Psoas muscle (tissue), 8 donors: ENCODE measurements at regions of chr20 and their contacts with region 1.

Region 1: GRCh38 chr20:23050847-23051631 is 1.6 kb upstream of the THBD start:
- DNase-seq: peak; percentile 86 to 91
- ATAC-seq: peak; percentile 34 to 51 (median 50)
- H3K4me3 ChIP-seq: peak overlapping the region; percentile 75
- H3K27ac ChIP-seq: peak overlapping the region; percentile 97
- H3K4me1 ChIP-seq: peaks cover 12% of the 10 kb centered on the region
- H3K27me3 ChIP-seq: no peaks in the 10 kb centered on the region
- CTCF ChIP-seq: peak; percentile 77

Region 2: DNA sequence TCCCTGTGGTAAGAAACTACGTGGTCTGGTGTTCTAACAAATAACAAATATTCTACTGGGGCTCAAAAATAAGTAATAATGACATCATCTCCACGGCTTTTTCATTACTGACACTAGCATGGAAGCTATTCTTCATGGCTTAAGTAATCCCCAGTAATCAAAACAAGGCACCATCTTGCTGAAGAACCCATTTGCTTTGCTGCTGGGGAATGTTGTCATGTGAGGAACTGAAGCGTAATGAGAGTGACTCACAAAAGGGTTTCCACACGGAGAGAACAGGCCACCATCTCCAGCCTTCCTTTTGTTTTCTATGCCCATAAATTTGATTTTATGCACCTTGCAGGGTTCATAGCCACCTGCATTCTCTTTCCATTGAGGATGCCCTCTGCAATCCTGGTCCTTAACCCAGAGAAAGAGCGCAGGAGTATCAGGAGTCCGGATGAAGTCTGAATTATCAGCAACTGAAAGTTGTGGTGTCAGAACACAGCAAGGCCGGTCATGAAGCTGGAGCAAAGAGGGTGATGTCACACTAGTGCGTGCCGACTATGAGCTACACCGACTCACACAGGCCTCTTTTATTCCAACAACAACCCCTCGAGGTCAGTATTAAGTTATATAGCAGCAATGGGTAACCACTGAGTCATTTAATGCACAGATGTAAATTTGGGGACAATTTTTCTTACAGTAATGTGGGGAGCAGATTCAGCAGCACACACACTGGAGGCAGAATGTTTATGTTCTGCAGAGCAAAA is 189.6 kb before region 1 on chr20:
- intact Hi-C with region 1: loop called in 1 of 2 experiments (anchors 10 kb)
- DNase-seq: no peak
- ATAC-seq: no peak
- H3K4me3 ChIP-seq: no peak overlapping the region
- H3K27ac ChIP-seq: no peak overlapping the region
- H3K4me1 ChIP-seq: no peaks in the 10 kb centered on the region
- H3K27me3 ChIP-seq: peaks cover 0 to 4% (median 2%) of the 10 kb centered on the region in 3 donors
- CTCF ChIP-seq: no peak

Region 3: GRCh38 chr20:23116311-23117089 is 65.5 kb after region 1 on chr20:
- intact Hi-C with region 1: no loop called
- DNase-seq: no peak
- ATAC-seq: peak in 2 of 4 donors; percentile 27 to 36
- H3K4me3 ChIP-seq: no peak overlapping the region
- H3K27ac ChIP-seq: no peak overlapping the region
- H3K4me1 ChIP-seq: peaks cover 8% of the 10 kb centered on the region
- H3K27me3 ChIP-seq: no peaks in the 10 kb centered on the region
- CTCF ChIP-seq: no peak

Region 4: DNA sequence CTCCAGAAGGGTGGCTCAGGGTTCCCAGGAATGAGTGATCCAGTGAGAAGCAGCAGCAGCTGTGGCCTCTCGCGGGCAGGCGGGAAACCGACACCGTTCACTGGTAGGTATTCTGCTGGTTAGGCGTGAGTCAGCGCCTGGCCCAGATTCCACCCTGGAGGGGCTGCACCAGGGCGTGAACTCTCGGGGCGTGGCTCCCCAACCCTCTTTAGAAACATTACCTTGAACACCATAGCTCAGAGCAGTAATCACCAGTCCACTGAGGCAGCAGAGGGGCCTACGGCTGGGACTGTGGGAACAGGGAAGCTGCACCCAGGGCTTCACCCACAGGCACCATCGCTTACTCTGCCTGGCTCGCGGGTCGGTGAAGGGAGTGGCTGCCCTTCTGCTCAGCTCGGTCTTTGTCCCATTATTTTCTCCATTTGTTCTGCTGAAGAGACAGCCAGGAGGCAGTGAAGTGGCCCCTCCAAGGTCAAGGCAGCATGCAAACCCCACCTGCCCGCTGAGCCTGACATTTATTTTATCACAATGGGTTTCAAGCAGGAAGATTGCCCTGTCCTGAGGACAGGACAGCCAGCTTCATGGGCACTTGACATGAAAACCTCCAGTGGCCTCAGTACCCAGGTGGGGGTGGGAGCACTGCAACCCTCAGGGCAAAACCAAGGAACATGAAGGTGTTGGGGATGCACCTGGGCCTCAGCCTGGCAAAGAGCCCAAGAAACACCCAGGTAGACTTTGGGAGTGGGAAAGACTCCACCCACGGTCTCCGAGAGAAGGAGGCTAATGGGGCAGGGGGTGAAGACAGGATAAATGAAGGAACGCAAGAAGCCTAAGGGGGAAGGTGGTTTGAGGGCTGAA is 86.1 kb after region 1 on chr20:
- intact Hi-C with region 1: no loop called
- DNase-seq: peak; percentile 89 to 97
- ATAC-seq: peak; percentile 96 to 98 (median 98)
- H3K4me3 ChIP-seq: peak overlapping the region; percentile 30
- H3K27ac ChIP-seq: peak overlapping the region; percentile 91
- H3K4me1 ChIP-seq: peaks cover 59% of the 10 kb centered on the region
- H3K27me3 ChIP-seq: no peaks in the 10 kb centered on the region
- CTCF ChIP-seq: no peak

Region 5: DNA sequence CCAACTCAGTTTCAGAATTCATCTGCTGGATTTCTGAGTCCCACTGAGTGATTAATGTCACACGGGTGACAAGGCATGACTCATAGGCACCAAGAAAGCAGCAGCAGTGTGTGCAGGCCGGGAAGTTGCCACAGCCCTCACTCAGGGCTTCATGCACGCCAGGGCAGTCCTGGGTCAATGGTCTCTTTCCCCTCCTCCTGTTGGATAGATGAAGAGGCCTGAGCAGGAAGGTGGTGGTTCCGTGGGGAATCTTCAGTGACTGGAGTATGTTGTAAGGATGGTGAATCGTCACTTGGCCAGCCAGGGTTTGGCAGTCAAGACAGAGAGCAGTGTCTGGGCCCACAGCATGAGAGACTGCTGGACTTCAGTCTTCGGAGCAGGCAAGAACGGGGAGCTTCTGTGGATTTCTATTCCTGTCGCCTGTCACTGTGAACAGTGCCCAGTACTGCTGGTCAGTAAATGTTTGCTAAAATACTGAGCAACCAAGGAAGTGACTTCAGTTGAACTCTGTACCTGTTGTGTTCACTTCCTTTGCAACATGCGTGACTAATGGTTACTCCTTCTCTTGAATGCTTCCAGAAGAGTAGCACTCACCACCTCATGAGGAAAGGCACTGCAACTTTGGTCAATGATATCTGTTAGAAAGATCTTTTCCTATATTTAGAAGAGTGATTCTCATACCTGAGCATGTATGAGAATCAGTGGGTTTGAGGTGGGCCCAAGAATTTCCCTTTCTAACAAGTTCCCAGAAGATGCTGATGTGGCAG is 97.1 kb after region 1 on chr20:
- intact Hi-C with region 1: loop called (anchors 2 to 5 kb)
- DNase-seq: peak; percentile 87 to 93
- ATAC-seq: peak; percentile 70 to 78 (median 74)
- H3K4me3 ChIP-seq: peak overlapping the region; percentile 53
- H3K27ac ChIP-seq: peak overlapping the region; percentile 96
- H3K4me1 ChIP-seq: peaks cover 86% of the 10 kb centered on the region
- H3K27me3 ChIP-seq: no peaks in the 10 kb centered on the region
- CTCF ChIP-seq: no peak

Region 6: GRCh38 chr20:23200918-23201317 is 149.9 kb after region 1 on chr20:
- intact Hi-C with region 1: loop called in 1 of 2 experiments (anchors 10 kb)
- DNase-seq: peak; percentile 32 to 68
- ATAC-seq: peak; percentile 67 to 91 (median 80)
- H3K4me3 ChIP-seq: no peak overlapping the region
- H3K27ac ChIP-seq: no peak overlapping the region
- H3K4me1 ChIP-seq: peaks cover 10% of the 10 kb centered on the region
- H3K27me3 ChIP-seq: no peaks in the 10 kb centered on the region
- CTCF ChIP-seq: peak; percentile 54

Region 7: GRCh38 chr20:23245553-23246181 is 194.6 kb after region 1 on chr20:
- intact Hi-C with region 1: loop called in 1 of 2 experiments (anchors 10 kb)
- DNase-seq: peak; percentile 46 to 68
- ATAC-seq: peak in 3 of 4 donors; percentile 60 to 73 (median 61)
- H3K4me3 ChIP-seq: no peak overlapping the region
- H3K27ac ChIP-seq: no peak overlapping the region
- H3K4me1 ChIP-seq: peaks cover 5% of the 10 kb centered on the region
- H3K27me3 ChIP-seq: peaks cover 0 to 7% (median 0%) of the 10 kb centered on the region in 3 donors
- CTCF ChIP-seq: peak; percentile 28